ENCODE measurements at regions of chr1 and their contacts with region 1.

Region 1: GRCh38 chr1:156226116-156226538 is 13.3 kb downstream of the PMF1 start:
- DNase-seq: no peak
- ATAC-seq: no peak
- H3K4me3 Mint-ChIP-seq: no peak overlapping the region
- H3K27ac Mint-ChIP-seq: no peak overlapping the region
- H3K4me1 Mint-ChIP-seq: peaks cover 4% of the 10 kb centered on the region
- H3K27me3 Mint-ChIP-seq: no peaks in the 10 kb centered on the region
- CTCF ChIP-seq: no peak

Region 2: DNA sequence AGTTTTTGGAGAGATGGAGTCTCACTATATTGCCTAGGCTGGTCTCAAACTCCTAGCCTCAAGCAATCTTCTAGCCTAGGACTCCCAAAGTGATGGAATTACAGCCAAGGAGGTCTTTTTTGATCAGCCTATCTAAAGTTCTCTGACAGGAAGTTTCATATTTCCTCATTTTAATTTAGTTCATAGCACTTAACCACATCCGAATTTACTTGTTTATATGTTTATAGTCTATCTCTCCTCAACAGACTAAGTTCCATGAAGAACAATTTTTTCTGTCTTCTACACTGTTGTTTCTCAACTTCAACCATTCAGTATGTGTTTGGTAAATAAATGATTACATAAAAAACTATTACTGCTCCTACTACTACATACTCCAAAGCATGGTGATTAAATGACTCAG is 417.0 kb before region 1 on chr1:
- CTCF ChIA-PET with region 1: no interaction called
- POLR2A ChIA-PET with region 1: no interaction called
- DNase-seq: no peak
- ATAC-seq: no peak
- H3K4me3 Mint-ChIP-seq: no peak overlapping the region
- H3K27ac Mint-ChIP-seq: no peak overlapping the region
- H3K4me1 Mint-ChIP-seq: no peaks in the 10 kb centered on the region
- H3K27me3 Mint-ChIP-seq: no peaks in the 10 kb centered on the region
- CTCF ChIP-seq: no peak

Region 3: DNA sequence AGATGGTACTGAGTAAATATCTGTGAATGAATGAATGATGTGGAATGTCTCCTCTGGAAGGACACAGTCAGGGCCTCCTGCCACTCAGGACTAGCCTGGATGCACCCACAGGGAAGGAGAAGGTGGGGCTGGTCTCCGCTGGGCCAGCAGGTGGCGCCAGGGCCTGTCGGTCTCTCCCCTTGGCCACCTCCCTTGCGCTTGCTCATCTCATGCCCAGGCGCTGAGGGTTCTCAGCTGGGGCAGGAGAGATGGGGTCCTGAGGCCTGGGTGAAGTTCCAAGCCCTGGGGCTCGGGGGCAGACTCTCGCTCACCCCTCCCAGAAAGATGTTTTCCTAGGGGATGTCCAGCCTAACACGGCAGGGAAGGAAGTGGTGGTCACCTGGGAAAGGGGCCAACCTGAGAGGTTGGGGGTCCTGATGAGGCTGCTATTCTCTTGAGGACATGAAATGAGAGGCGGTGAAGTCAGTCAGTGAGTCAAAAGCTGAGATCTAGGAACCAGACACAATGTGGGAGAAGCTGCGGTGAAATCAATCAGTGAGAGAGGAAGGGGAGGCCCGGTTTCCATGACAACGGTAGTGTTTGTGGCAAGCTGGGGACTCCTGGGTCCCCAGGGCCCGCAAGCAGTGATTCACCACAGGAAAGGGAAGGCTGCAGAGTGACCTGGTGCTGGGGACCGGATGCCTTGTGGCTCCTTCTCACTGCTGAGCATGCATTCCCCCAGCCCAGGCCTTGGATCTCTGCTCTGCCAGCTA is 129.3 kb before region 1 on chr1:
- CTCF ChIA-PET with region 1: interaction called, 13 read pairs
- POLR2A ChIA-PET with region 1: no interaction called
- DNase-seq: peak; percentile 92
- ATAC-seq: peak; percentile 94
- H3K4me3 Mint-ChIP-seq: no peak overlapping the region
- H3K27ac Mint-ChIP-seq: no peak overlapping the region
- H3K4me1 Mint-ChIP-seq: peaks cover 20% of the 10 kb centered on the region
- H3K27me3 Mint-ChIP-seq: no peaks in the 10 kb centered on the region
- CTCF ChIP-seq: peak; percentile 90

Region 4: GRCh38 chr1:156129706-156130581 is 96.2 kb before region 1 on chr1:
- CTCF ChIA-PET with region 1: interaction called, 21 read pairs
- POLR2A ChIA-PET with region 1: no interaction called
- DNase-seq: peak; percentile 94
- ATAC-seq: peak; percentile 92
- H3K4me3 Mint-ChIP-seq: no peak overlapping the region
- H3K27ac Mint-ChIP-seq: peak overlapping the region; percentile 96
- H3K4me1 Mint-ChIP-seq: peaks cover 29% of the 10 kb centered on the region
- H3K27me3 Mint-ChIP-seq: no peaks in the 10 kb centered on the region; the same call in 1 of the 2 replicates
- CTCF ChIP-seq: peak; percentile 93

Region 5: GRCh38 chr1:156154317-156154749 is 71.8 kb before region 1 on chr1:
- CTCF ChIA-PET with region 1: interaction called, 124 read pairs
- POLR2A ChIA-PET with region 1: interaction called, 5 read pairs
- DNase-seq: no peak
- ATAC-seq: no peak
- H3K4me3 Mint-ChIP-seq: no peak overlapping the region
- H3K27ac Mint-ChIP-seq: no peak overlapping the region
- H3K4me1 Mint-ChIP-seq: peaks cover 59% of the 10 kb centered on the region
- H3K27me3 Mint-ChIP-seq: no peaks in the 10 kb centered on the region
- CTCF ChIP-seq: no peak

Region 6: GRCh38 chr1:156177919-156178654 is 48.0 kb before region 1 on chr1:
- CTCF ChIA-PET with region 1: interaction called, 13 read pairs
- POLR2A ChIA-PET with region 1: no interaction called
- DNase-seq: no peak
- ATAC-seq: no peak
- H3K4me3 Mint-ChIP-seq: no peak overlapping the region
- H3K27ac Mint-ChIP-seq: peak overlapping the region; percentile 57
- H3K4me1 Mint-ChIP-seq: peaks cover 49% of the 10 kb centered on the region
- H3K27me3 Mint-ChIP-seq: no peaks in the 10 kb centered on the region
- CTCF ChIP-seq: no peak

Region 7: DNA sequence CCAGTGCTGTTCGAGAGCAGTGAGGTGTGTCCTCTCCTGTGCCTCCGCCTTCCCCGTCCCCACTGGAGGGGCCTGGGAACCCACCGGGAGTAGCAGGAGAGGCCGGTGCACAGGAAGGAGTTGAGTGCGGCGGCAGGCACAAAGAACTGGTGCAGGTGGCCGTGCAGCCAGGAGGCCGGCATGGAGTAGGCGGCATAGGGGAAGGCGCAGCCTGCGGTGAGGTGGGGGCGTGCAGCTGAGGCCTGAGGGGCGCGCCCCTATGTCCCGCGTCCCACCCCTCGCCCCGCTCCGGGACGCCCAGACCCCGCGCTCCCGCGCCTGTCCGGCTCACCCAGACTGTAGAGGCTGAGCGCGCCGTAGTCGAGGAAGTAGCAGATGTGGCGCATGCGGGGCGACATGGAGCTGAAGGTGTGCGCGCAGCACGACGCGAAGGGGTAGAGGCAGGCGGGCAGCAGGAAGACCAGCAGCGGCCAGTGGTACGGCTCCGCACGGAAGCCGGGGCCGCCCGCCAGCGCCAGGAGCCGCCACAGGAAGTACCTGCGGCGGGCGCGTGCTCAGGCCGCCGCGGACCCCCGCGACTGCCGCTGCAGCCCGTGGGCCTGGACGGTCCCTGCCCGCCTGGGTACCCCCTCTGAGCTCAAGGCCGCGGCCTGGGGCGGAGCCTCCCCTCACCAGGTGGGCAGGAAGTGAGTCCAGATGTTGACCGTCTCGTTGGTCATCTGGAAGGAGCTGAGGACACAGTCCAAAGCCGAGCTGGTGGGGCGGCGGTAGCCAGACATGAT is 19.5 kb after region 1 on chr1:
- CTCF ChIA-PET with region 1: interaction called, 33 read pairs
- POLR2A ChIA-PET with region 1: no interaction called
- DNase-seq: peak; percentile 63
- ATAC-seq: peak; percentile 23
- H3K4me3 Mint-ChIP-seq: peak overlapping the region; percentile 74
- H3K27ac Mint-ChIP-seq: no peak overlapping the region
- H3K4me1 Mint-ChIP-seq: peaks cover 22% of the 10 kb centered on the region
- H3K27me3 Mint-ChIP-seq: peaks cover 4% of the 10 kb centered on the region
- CTCF ChIP-seq: no peak

Measured in WTC11 (cell line).